B cell (primary cell): ENCODE measurements at regions of chr7 and their contacts with region 1.

Region 1: DNA sequence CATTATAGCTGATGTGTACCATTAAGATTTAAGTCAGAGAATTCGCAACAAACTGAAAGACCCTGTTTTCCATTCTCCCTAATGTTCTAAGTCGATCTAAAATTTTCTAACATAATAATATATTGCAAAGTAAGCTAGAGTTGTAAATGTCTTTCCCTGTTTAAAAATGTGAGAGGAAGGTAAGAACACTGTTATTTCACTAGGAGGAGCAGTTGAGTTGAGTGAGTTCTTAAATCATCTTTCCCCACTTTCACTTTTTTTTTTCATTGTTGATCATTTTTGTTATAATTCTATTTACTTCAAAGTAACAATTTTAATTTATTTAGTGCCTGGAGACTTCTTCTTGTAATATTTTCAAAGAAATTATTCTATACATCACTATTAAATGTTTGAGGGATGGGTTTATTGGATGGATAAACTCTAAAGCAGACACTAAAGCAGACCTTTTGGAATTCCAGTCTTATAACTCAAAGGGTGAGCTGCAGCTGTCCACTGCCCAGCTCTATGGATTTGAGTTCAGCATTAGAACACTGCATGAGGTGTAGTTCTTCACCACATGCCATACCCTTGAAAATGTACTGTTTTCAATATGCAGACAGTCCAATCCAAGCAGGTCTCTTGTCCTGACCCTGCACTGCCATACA is 181.3 kb upstream of the FZD1 start:
- DNase-seq: no peak
- ATAC-seq: no peak
- H3K4me3 ChIP-seq: no peak overlapping the region
- H3K4me3 Mint-ChIP-seq: no peak overlapping the region
- H3K27ac ChIP-seq: peak overlapping the region in 1 of 2 donors; percentile 9
- H3K27ac Mint-ChIP-seq: no peak overlapping the region
- H3K4me1 ChIP-seq: peaks cover 0 to 5% of the 10 kb centered on the region in 2 donors
- H3K4me1 Mint-ChIP-seq: peaks cover 22% of the 10 kb centered on the region
- H3K27me3 ChIP-seq: no peaks in the 10 kb centered on the region
- H3K27me3 Mint-ChIP-seq: no peaks in the 10 kb centered on the region
- CTCF ChIP-seq: peak; percentile 67

Region 2: GRCh38 chr7:91151916-91152315 is 68.9 kb after region 1 on chr7:
- CTCF ChIA-PET with region 1: no interaction called
- POLR2A ChIA-PET with region 1: no interaction called
- intact Hi-C with region 1: no loop called
- DNase-seq: no peak
- ATAC-seq: no peak
- H3K4me3 ChIP-seq: no peak overlapping the region
- H3K4me3 Mint-ChIP-seq: no peak overlapping the region
- H3K27ac ChIP-seq: no peak overlapping the region
- H3K27ac Mint-ChIP-seq: no peak overlapping the region
- H3K4me1 ChIP-seq: no peaks in the 10 kb centered on the region
- H3K4me1 Mint-ChIP-seq: no peaks in the 10 kb centered on the region
- H3K27me3 ChIP-seq: no peaks in the 10 kb centered on the region
- H3K27me3 Mint-ChIP-seq: no peaks in the 10 kb centered on the region
- CTCF ChIP-seq: no peak

Region 3: DNA sequence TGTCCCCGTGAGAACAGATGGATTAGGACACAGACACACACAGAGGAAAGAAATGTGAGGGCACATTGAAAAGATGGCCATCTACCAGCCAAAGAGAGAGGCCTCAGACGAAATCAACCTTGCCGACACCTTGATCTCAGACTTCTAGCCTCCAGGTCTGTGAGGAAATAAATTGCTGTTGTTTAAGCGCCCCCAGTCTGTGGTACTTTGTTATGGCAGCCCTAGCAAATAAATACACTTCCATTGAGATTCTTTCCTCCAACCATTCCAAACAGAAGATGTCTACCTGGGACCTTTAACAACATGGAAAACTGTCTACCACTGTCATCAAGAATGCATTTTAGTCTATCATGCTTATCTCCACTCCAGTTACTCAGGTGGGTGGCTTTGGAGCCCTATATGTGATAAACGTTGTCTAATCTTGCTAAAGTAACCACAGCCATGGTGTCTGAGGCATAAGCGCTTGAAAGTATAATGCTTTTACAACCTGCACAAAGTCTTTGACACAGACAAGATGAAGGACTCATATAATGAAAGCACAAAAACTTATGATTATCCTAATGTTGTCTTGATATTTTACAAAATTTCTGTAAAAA is 553.3 kb after region 1 on chr7:
- CTCF ChIA-PET with region 1: no interaction called
- POLR2A ChIA-PET with region 1: no interaction called
- intact Hi-C with region 1: loop called (anchors 2 kb)
- DNase-seq: peak; percentile 10
- ATAC-seq: no peak
- H3K4me3 ChIP-seq: no peak overlapping the region
- H3K4me3 Mint-ChIP-seq: no peak overlapping the region
- H3K27ac ChIP-seq: no peak overlapping the region
- H3K27ac Mint-ChIP-seq: no peak overlapping the region
- H3K4me1 ChIP-seq: no peaks in the 10 kb centered on the region
- H3K4me1 Mint-ChIP-seq: no peaks in the 10 kb centered on the region
- H3K27me3 ChIP-seq: no peaks in the 10 kb centered on the region
- H3K27me3 Mint-ChIP-seq: no peaks in the 10 kb centered on the region
- CTCF ChIP-seq: peak; percentile 35

Region 4: DNA sequence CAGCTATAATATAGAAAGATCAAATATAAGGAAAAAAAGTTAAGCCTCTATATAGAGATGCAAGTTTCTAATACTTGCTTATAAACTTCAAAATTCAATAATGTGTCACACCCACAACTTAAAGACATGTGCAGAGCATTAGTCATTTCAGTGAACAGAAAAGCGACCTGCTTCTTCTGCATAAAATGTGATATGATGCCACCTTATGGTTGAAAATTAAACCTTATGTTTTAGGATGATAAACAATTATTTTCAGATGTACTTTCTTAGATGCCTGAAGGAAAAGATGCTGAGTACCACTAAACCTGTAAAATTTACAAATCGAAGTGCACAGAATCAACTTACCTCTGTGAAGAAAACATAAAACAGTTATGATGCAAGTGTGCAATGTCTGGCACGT is 701.5 kb after region 1 on chr7:
- CTCF ChIA-PET with region 1: interaction called, 3 read pairs
- POLR2A ChIA-PET with region 1: no interaction called
- intact Hi-C with region 1: loop called (anchors 2 kb)
- DNase-seq: no peak
- ATAC-seq: no peak
- H3K4me3 ChIP-seq: no peak overlapping the region
- H3K4me3 Mint-ChIP-seq: no peak overlapping the region
- H3K27ac ChIP-seq: no peak overlapping the region
- H3K27ac Mint-ChIP-seq: no peak overlapping the region
- H3K4me1 ChIP-seq: no peaks in the 10 kb centered on the region
- H3K4me1 Mint-ChIP-seq: no peaks in the 10 kb centered on the region
- H3K27me3 ChIP-seq: no peaks in the 10 kb centered on the region
- H3K27me3 Mint-ChIP-seq: peaks cover 8% of the 10 kb centered on the region
- CTCF ChIP-seq: no peak